Calu3 (cell line): ENCODE measurements at regions of chrX and their contacts with region 1.

Region 1: DNA sequence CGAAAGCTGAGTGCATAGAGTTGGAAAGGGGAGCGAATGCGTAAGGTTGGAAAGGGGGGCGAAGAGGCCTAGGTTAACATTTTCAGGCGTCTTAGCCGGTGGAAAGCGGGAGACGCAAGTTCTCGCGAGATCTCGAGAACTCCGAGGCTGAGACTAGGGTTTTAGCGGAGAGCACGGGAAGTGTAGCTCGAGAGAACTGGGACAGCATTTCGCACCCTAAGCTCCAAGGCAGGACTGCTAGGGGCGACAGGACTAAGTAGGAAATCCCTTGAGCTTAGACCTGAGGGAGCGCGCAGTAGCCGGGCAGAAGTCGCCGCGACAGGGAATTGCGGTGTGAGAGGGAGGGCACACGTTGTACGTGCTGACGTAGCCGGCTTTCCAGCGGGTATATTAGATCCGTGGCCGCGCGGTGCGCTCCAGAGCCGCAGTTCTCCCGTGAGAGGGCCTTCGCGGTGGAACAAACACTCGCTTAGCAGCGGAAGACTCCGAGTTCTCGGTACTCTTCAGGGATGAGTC is at the start of gene DDX3X:
- DNase-seq: peak; percentile 79
- H3K4me3 Mint-ChIP-seq: peak within 1 kb of the TSS; percentile 73
- H3K27ac Mint-ChIP-seq: peak within 1 kb of the TSS; percentile 100
- H3K4me1 Mint-ChIP-seq: no peaks in the 10 kb centered on the region
- H3K27me3 Mint-ChIP-seq: no peaks in the 10 kb centered on the region
- CTCF ChIP-seq: no peak
- total RNA-seq, gene DDX3X: 308 and 321 TPM in 2 replicates

Region 2: GRCh38 chrX:41116948-41117347 is 216.9 kb before region 1 on chrX:
- CTCF ChIA-PET with region 1: no interaction called
- intact Hi-C with region 1: no loop called
- DNase-seq: no peak
- H3K4me3 Mint-ChIP-seq: peak overlapping the region; percentile 31
- H3K27ac Mint-ChIP-seq: no peak overlapping the region
- H3K4me1 Mint-ChIP-seq: peaks cover 51% of the 10 kb centered on the region
- H3K27me3 Mint-ChIP-seq: no peaks in the 10 kb centered on the region
- CTCF ChIP-seq: no peak

Region 3: DNA sequence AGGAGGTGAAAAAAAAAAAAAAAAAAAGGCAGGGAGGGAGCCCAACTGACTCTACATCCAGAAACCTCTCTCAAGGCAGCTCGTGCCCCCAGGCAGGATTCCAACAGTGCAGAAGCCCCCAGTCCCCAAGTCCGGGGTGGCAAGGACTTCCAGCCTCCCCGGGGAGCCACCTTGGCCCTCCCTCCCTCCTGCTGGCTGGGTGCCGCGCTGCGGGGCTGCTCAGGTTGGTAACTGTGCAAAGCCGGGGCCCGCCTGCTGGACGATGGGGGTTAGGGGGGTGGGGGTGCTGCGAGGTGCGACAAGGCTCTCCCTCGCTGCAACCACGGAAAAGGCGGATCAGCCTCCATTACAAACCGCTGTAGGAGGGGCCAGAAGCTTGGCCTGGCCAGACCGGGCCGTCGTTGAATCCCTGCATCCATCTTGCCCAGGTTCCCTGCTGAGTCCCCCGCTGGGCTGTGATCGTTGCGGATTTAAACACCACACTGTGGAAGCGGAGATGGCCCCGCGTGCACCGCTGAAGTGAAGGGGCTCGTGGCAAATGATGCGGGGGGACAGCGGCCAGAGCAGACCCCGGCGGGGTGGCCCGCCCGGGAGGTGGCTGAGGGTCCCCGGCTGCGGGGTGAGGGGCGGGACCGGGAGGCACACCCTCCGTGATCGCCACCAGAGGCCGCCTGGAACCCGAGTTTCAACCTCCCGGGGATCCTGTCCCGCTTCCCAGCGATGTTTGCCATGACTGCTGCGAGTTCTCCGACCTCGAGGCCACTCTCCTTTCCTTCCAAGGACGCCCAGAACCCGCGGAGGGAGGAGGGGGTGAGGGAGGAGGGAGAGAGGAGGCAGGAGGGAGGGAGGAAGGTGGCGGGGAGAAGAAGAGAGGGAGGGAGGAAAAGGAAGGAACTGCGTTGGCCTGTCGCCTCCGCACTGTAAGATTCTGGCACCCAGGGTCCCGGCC is 57.9 kb before region 1 on chrX:
- CTCF ChIA-PET with region 1: interaction called, 3 read pairs
- intact Hi-C with region 1: loop called (anchors 5 kb)
- DNase-seq: peak; percentile 78
- H3K4me3 Mint-ChIP-seq: peak overlapping the region; percentile 74
- H3K27ac Mint-ChIP-seq: peak overlapping the region; percentile 42
- H3K4me1 Mint-ChIP-seq: no peaks in the 10 kb centered on the region
- H3K27me3 Mint-ChIP-seq: no peaks in the 10 kb centered on the region
- CTCF ChIP-seq: no peak

Region 4: GRCh38 chrX:41300758-41301437 is 32.9 kb before region 1 on chrX:
- CTCF ChIA-PET with region 1: interaction called, 6 read pairs
- intact Hi-C with region 1: loop called (anchors 2 kb)
- DNase-seq: no peak
- H3K4me3 Mint-ChIP-seq: no peak overlapping the region
- H3K27ac Mint-ChIP-seq: peak overlapping the region; percentile 88
- H3K4me1 Mint-ChIP-seq: peaks cover 37% of the 10 kb centered on the region
- H3K27me3 Mint-ChIP-seq: no peaks in the 10 kb centered on the region
- CTCF ChIP-seq: no peak

Region 5: GRCh38 chrX:41384041-41384705 is 50.4 kb after region 1 on chrX:
- CTCF ChIA-PET with region 1: interaction called, 4 read pairs
- intact Hi-C with region 1: loop called (anchors 10 kb)
- DNase-seq: peak; percentile 82
- H3K4me3 Mint-ChIP-seq: peak overlapping the region; percentile 24
- H3K27ac Mint-ChIP-seq: peak overlapping the region; percentile 87
- H3K4me1 Mint-ChIP-seq: peaks cover 33% of the 10 kb centered on the region
- H3K27me3 Mint-ChIP-seq: no peaks in the 10 kb centered on the region
- CTCF ChIP-seq: no peak

Region 6: GRCh38 chrX:41435708-41436107 is 101.9 kb after region 1 on chrX:
- CTCF ChIA-PET with region 1: no interaction called
- intact Hi-C with region 1: loop called (anchors 5 kb)
- DNase-seq: no peak
- H3K4me3 Mint-ChIP-seq: no peak overlapping the region
- H3K27ac Mint-ChIP-seq: no peak overlapping the region
- H3K4me1 Mint-ChIP-seq: no peaks in the 10 kb centered on the region
- H3K27me3 Mint-ChIP-seq: no peaks in the 10 kb centered on the region
- CTCF ChIP-seq: no peak